ENCODE measurements at regions of chr14 and their contacts with region 1.

Region 1: DNA sequence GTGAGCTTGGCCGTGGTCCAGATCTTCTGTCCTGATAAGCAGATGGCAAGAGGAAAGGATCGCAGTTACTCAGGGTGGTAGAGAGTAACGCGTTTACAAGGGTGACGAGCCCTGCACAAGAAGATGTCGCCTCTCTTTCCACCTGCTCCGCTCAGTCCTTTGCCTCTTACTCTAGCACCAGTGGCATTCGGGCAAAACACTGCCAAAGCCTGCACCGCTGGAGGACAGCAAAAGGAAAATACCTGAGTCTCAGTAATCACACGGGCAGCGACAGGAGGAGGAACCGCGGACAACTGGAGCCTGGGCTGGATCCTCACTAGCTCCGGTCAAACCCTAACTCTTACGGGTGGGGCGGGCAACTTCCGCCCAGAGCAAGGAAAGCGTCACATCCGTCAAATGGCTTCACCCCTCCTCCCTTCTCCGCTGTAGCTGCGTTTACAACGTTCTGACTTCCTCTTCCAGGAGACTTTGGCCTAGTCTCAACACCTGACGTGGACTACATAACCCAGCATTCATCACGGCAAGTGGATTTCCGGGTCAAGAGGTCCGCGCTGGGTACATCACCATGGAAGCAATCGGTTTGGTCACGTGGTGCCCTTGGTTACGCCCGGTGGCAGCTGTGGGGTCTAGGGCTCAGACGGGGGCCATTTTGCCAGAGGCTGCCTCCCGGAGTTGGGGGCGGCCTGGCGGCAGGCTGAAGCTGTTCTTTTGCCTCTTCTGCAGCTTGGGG is at the starts of genes KLHL28 and TOGARAM1:
- DNase-seq: peak; percentile 98
- H3K4me3 Mint-ChIP-seq: no peak within 1 kb of the TSS
- H3K27ac Mint-ChIP-seq: no peak within 1 kb of the TSS
- H3K4me1 Mint-ChIP-seq: peaks cover 55% of the 10 kb centered on the region
- H3K27me3 Mint-ChIP-seq: no peaks in the 10 kb centered on the region
- total RNA-seq, gene KLHL28: 19.1 to 19.8 TPM
- total RNA-seq, gene TOGARAM1: 6.5 to 6.6 TPM

Region 2: GRCh38 chr14:44897045-44897844 is 64.5 kb before region 1 on chr14:
- CTCF ChIA-PET with region 1: no interaction called
- POLR2A ChIA-PET with region 1: interaction called, 38 read pairs
- DNase-seq: peak; percentile 98
- H3K4me3 Mint-ChIP-seq: peak overlapping the region; percentile 89
- H3K27ac Mint-ChIP-seq: peak overlapping the region; percentile 85
- H3K4me1 Mint-ChIP-seq: peaks cover 20% of the 10 kb centered on the region
- H3K27me3 Mint-ChIP-seq: no peaks in the 10 kb centered on the region

Region 3: GRCh38 chr14:44945264-44945663 is 16.5 kb before region 1 on chr14:
- CTCF ChIA-PET with region 1: no interaction called
- POLR2A ChIA-PET with region 1: interaction called, 15 read pairs
- DNase-seq: no peak
- H3K4me3 Mint-ChIP-seq: no peak overlapping the region
- H3K27ac Mint-ChIP-seq: no peak overlapping the region
- H3K4me1 Mint-ChIP-seq: peaks cover 15% of the 10 kb centered on the region
- H3K27me3 Mint-ChIP-seq: no peaks in the 10 kb centered on the region

Region 4: GRCh38 chr14:45089813-45090212 is 128.0 kb after region 1 on chr14:
- CTCF ChIA-PET with region 1: interaction called, 3 read pairs
- POLR2A ChIA-PET with region 1: interaction called, 62 read pairs
- DNase-seq: no peak
- H3K4me3 Mint-ChIP-seq: no peak overlapping the region
- H3K27ac Mint-ChIP-seq: peak overlapping the region; percentile 56
- H3K4me1 Mint-ChIP-seq: peaks cover 69% of the 10 kb centered on the region
- H3K27me3 Mint-ChIP-seq: no peaks in the 10 kb centered on the region

Region 5: GRCh38 chr14:45253068-45253753 is 291.4 kb after region 1 on chr14 and contains the start of gene MIS18BP1:
- CTCF ChIA-PET with region 1: interaction called, 7 read pairs
- POLR2A ChIA-PET with region 1: interaction called, 33 read pairs
- DNase-seq: peak; percentile 96
- H3K4me3 Mint-ChIP-seq: peak within 1 kb of the TSS; percentile 83
- H3K27ac Mint-ChIP-seq: peak within 1 kb of the TSS; percentile 90
- H3K4me1 Mint-ChIP-seq: peaks cover 29% of the 10 kb centered on the region
- H3K27me3 Mint-ChIP-seq: peaks cover 3% of the 10 kb centered on the region
- total RNA-seq, gene MIS18BP1: 66.3 to 66.9 TPM